Panc1 (cell line): ENCODE measurements at regions of chr16 and their contacts with region 1.

Region 1: DNA sequence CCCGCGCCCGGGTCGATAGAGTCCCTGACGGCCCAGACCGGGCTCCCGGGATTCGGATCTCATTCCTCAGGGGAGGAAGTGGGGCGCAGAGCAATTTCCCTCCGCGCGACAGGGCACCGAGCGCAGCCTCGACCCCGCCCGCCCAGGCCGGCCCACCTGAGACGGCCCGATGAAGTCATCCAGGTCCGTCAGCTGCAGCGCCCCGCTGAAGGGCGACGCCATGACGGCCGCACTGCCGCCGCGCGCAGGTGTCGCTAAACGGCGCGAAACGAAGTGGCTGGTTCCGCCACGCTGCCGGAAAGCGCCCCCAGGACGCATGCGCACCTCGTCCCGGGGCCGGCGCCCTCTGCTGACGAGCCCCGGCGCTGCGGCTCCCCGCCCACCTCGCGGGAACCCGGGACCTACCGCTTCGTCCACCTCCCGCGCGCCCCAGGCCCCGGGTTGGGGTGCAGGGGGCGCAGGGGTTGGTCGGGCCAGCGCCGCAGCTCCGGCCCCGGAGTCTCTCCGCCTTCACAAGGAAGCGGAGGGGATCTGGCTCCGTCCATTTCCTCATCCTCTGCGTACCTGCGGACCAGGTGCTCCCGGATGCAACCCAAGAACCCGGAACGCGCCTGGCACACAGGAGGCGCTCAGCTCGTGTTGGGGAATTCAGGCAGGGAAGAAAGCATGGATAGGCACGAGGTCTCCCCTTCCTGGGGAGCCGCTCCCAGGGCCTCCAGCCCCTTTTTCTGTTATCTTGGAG is at the start of gene CIAO3:
- DNase-seq: no peak
- ATAC-seq: peak; percentile 89
- H3K4me3 ChIP-seq: peak within 1 kb of the TSS; percentile 66 to 89
- H3K27ac ChIP-seq: peak within 1 kb of the TSS; percentile 83
- H3K4me1 ChIP-seq: peaks cover 8% of the 10 kb centered on the region; the same call in 1 of the 2 replicates
- H3K27me3 ChIP-seq: no peaks in the 10 kb centered on the region
- CTCF ChIP-seq: peak; percentile 98
- total RNA-seq, gene CIAO3: 34.0 TPM

Region 2: DNA sequence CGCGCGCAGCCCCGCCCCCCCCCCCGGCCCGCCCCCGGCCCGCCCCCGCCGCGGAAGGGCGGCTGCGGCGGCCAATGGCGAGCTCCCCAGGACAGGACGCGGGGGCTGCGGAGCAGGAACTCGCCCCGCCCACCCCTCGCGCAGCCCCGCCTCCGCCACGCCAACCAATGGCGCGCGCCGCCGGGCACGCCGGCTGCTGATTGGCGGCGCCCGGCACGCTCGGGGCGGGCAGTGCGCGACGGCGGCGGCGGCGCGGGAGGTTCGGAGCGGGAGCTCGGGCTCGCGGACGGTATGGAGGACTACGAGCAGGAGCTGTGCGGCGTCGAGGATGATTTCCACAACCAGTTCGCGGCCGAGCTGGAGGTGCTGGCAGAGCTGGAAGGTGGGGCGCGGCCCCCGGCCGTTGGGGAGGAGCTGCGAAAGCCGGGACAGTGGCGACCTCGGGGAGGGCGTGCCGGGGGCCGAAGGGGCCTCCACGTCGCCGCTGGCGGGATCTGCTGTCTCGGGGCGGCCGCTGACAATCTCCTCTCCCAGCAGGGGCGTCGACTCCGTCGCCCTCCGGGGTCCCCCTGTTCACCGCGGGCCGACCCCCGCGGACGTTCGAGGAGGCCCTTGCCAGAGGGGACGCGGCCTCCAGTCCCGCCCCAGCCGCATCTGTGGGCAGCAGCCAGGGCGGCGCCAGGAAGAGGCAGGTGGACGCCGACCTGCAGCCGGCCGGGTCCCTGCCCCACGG is 47.6 kb after region 1 on chr16 and contains the start of gene CHTF18:
- CTCF ChIA-PET with region 1: interaction called, 7 read pairs
- POLR2A ChIA-PET with region 1: interaction called, 7 read pairs
- in situ Hi-C with region 1: no loop called
- intact Hi-C with region 1: loop called (anchors 5 kb)
- DNase-seq: no peak
- ATAC-seq: peak; percentile 85
- H3K4me3 ChIP-seq: peak within 1 kb of the TSS; percentile 72 to 89
- H3K27ac ChIP-seq: peak within 1 kb of the TSS; percentile 79
- H3K4me1 ChIP-seq: peaks cover 4% of the 10 kb centered on the region
- H3K27me3 ChIP-seq: no peaks in the 10 kb centered on the region
- CTCF ChIP-seq: no peak
- total RNA-seq, gene CHTF18: 118 TPM